ENCODE measurements at regions of chr13 and their contacts with region 1.

Region 1: GRCh38 chr13:23466144-23467002 is 32.9 kb upstream of the SACS start:
- DNase-seq: peak; percentile 28 to 81 (median 52)
- ATAC-seq: peak; percentile 88
- H3K4me3 ChIP-seq: peak overlapping the region; percentile 49
- H3K4me3 Mint-ChIP-seq: peak overlapping the region; percentile 86
- H3K27ac ChIP-seq: no peak overlapping the region
- H3K27ac Mint-ChIP-seq: no peak overlapping the region
- H3K4me1 ChIP-seq: peaks cover 14% of the 10 kb centered on the region
- H3K4me1 Mint-ChIP-seq: no peaks in the 10 kb centered on the region
- H3K27me3 ChIP-seq: no peaks in the 10 kb centered on the region
- H3K27me3 Mint-ChIP-seq: peaks cover 6% of the 10 kb centered on the region
- CTCF ChIP-seq: peak; percentile 63

Region 2: GRCh38 chr13:23254506-23254905 is 211.9 kb before region 1 on chr13:
- CTCF ChIA-PET with region 1: no interaction called
- POLR2A ChIA-PET with region 1: no interaction called
- intact Hi-C with region 1: no loop called
- DNase-seq: no peak
- ATAC-seq: no peak
- H3K4me3 ChIP-seq: no peak overlapping the region
- H3K4me3 Mint-ChIP-seq: no peak overlapping the region
- H3K27ac ChIP-seq: no peak overlapping the region
- H3K27ac Mint-ChIP-seq: no peak overlapping the region
- H3K4me1 ChIP-seq: no peaks in the 10 kb centered on the region
- H3K4me1 Mint-ChIP-seq: no peaks in the 10 kb centered on the region
- H3K27me3 ChIP-seq: no peaks in the 10 kb centered on the region
- H3K27me3 Mint-ChIP-seq: peaks cover 18% of the 10 kb centered on the region
- CTCF ChIP-seq: no peak

Region 3: DNA sequence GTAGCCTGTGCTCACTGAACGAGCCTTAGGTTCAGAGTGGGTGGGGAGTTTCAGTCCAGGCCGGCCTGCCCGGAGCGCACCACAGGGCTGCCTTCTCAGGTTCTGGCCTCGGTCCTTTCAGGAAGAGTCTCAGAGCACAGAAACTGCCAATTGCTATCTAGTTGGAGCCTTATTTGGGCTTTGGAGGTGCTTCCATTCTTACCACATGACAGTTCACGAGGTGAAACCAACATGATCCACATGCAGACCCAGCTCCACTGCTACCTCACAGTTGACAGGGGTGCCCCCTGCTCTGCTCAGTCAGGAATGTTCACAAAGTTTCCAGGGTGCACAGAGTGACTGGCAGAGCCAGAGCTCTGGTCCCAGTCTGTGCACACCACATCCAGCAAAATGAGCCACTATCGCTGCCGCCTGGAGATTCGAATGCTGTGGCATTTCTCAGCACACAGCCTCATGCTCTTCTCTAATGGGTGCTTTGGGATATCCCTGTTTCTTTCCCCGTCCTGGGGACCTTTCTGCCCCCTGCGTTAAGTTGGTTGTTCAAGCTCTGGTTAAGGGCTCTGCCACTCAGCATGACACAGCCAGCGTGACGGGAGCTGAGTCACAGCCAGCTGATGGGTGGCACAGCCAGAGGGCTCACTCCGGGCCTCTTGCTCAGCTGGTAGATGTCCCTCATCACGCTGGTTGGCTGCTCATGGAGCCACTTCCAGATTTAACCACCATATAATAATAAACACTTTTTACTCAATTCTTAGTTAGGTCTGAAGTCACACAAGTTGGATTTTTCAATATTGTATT is 25.4 kb before region 1 on chr13:
- CTCF ChIA-PET with region 1: no interaction called
- POLR2A ChIA-PET with region 1: no interaction called
- intact Hi-C with region 1: no loop called
- DNase-seq: no peak
- ATAC-seq: no peak
- H3K4me3 ChIP-seq: no peak overlapping the region
- H3K4me3 Mint-ChIP-seq: no peak overlapping the region
- H3K27ac ChIP-seq: no peak overlapping the region
- H3K27ac Mint-ChIP-seq: no peak overlapping the region
- H3K4me1 ChIP-seq: no peaks in the 10 kb centered on the region
- H3K4me1 Mint-ChIP-seq: no peaks in the 10 kb centered on the region
- H3K27me3 ChIP-seq: peaks cover 0 to 2% of the 10 kb centered on the region in 2 experiments
- H3K27me3 Mint-ChIP-seq: no peaks in the 10 kb centered on the region
- CTCF ChIP-seq: no peak

Region 4: GRCh38 chr13:23871616-23872220 is 405.3 kb after region 1 on chr13:
- CTCF ChIA-PET with region 1: no interaction called
- POLR2A ChIA-PET with region 1: no interaction called
- intact Hi-C with region 1: loop called (anchors 1 kb)
- DNase-seq: peak in 3 of 14 experiments; percentile 13 to 27 (median 18)
- ATAC-seq: no peak
- H3K4me3 ChIP-seq: no peak overlapping the region
- H3K4me3 Mint-ChIP-seq: no peak overlapping the region
- H3K27ac ChIP-seq: no peak overlapping the region
- H3K27ac Mint-ChIP-seq: no peak overlapping the region
- H3K4me1 ChIP-seq: no peaks in the 10 kb centered on the region
- H3K4me1 Mint-ChIP-seq: no peaks in the 10 kb centered on the region
- H3K27me3 ChIP-seq: no peaks in the 10 kb centered on the region
- H3K27me3 Mint-ChIP-seq: no peaks in the 10 kb centered on the region
- CTCF ChIP-seq: peak; percentile 80

Region 5: GRCh38 chr13:23888658-23889614 is 422.6 kb after region 1 on chr13 and contains the start of gene MIPEP:
- CTCF ChIA-PET with region 1: no interaction called
- POLR2A ChIA-PET with region 1: no interaction called
- intact Hi-C with region 1: loop called in 1 of 2 experiments (anchors 2 kb)
- DNase-seq: peak; percentile 68 to 94 (median 85)
- ATAC-seq: peak; percentile 91
- H3K4me3 ChIP-seq: peak within 1 kb of the TSS; percentile 81
- H3K4me3 Mint-ChIP-seq: peak within 1 kb of the TSS; percentile 94
- H3K27ac ChIP-seq: peak within 1 kb of the TSS; percentile 9 to 25
- H3K27ac Mint-ChIP-seq: peak within 1 kb of the TSS; percentile 76
- H3K4me1 ChIP-seq: peaks cover 18% of the 10 kb centered on the region
- H3K4me1 Mint-ChIP-seq: peaks cover 23% of the 10 kb centered on the region
- H3K27me3 ChIP-seq: no peaks in the 10 kb centered on the region
- H3K27me3 Mint-ChIP-seq: no peaks in the 10 kb centered on the region
- CTCF ChIP-seq: peak; percentile 86
- total RNA-seq, gene MIPEP: 3.9 to 4.8 TPM

Region 6: GRCh38 chr13:23899555-23899954 is 433.2 kb after region 1 on chr13:
- CTCF ChIA-PET with region 1: no interaction called
- POLR2A ChIA-PET with region 1: no interaction called
- intact Hi-C with region 1: loop called (anchors 1 to 2 kb)
- DNase-seq: peak in 10 of 14 experiments; percentile 4 to 62 (median 26)
- ATAC-seq: peak; percentile 77
- H3K4me3 ChIP-seq: no peak overlapping the region
- H3K4me3 Mint-ChIP-seq: no peak overlapping the region
- H3K27ac ChIP-seq: no peak overlapping the region
- H3K27ac Mint-ChIP-seq: no peak overlapping the region
- H3K4me1 ChIP-seq: peaks cover 12% of the 10 kb centered on the region
- H3K4me1 Mint-ChIP-seq: no peaks in the 10 kb centered on the region
- H3K27me3 ChIP-seq: peaks cover 24 to 38% of the 10 kb centered on the region in 2 experiments
- H3K27me3 Mint-ChIP-seq: peaks cover 50% of the 10 kb centered on the region
- CTCF ChIP-seq: peak; percentile 69

Region 7: DNA sequence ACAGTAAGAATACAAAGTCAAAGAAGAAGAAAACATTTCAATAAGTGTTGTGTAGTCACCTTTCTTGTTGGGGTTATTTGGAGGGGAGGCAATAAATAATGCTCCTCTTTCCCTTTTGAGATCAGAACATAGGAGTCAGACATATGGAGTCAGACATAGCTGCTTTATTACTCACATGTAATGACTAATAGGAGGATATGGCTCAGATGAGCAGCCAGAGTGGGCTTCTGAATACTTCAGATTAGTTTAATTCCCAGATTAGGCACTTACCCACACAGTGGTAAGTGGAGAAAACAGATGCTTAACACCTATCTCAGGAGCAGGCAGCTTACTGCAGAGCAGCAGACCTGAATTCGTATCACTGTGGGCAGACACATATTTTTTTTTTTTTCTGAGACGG is 462.6 kb after region 1 on chr13:
- CTCF ChIA-PET with region 1: no interaction called
- POLR2A ChIA-PET with region 1: no interaction called
- intact Hi-C with region 1: no loop called
- DNase-seq: no peak
- ATAC-seq: no peak
- H3K4me3 ChIP-seq: no peak overlapping the region
- H3K4me3 Mint-ChIP-seq: no peak overlapping the region
- H3K27ac ChIP-seq: no peak overlapping the region
- H3K27ac Mint-ChIP-seq: no peak overlapping the region
- H3K4me1 ChIP-seq: no peaks in the 10 kb centered on the region
- H3K4me1 Mint-ChIP-seq: no peaks in the 10 kb centered on the region
- H3K27me3 ChIP-seq: peaks cover 0 to 4% of the 10 kb centered on the region in 2 experiments
- H3K27me3 Mint-ChIP-seq: peaks cover 33% of the 10 kb centered on the region
- CTCF ChIP-seq: no peak

Region 8: DNA sequence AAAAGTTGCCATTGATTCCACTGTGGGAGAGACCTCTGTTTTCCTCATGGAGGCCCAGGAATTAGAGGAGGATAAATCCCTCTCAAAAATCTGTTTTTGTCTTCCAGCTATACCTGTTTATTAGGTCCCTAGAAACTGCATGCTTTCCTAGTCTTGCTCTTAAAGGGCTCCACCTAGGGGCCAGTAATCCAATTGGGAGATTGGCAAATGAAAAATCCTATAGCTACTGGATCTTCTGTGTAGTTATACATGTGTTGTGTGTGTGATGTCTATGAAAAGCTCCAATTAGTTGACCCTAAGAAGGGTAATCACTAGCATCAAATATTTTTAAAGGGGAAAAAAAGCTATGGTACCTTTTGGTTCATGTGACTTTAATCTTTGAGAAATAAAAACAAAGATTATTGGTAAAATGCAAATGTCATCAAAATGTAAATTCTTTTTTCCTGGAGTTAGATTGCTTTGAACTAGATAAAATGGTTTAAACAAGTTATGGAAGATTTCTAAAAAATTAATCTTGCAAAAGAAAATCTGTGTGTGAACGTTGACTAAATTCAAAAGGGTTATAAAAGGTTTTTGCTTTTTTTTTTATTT is 494.3 kb after region 1 on chr13:
- CTCF ChIA-PET with region 1: interaction called, 3 read pairs
- POLR2A ChIA-PET with region 1: no interaction called
- intact Hi-C with region 1: loop called in 1 of 2 experiments (anchors 5 kb)
- DNase-seq: peak in 4 of 14 experiments; percentile 14 to 41 (median 26)
- ATAC-seq: no peak
- H3K4me3 ChIP-seq: no peak overlapping the region
- H3K4me3 Mint-ChIP-seq: no peak overlapping the region
- H3K27ac ChIP-seq: no peak overlapping the region
- H3K27ac Mint-ChIP-seq: no peak overlapping the region
- H3K4me1 ChIP-seq: no peaks in the 10 kb centered on the region
- H3K4me1 Mint-ChIP-seq: no peaks in the 10 kb centered on the region
- H3K27me3 ChIP-seq: no peaks in the 10 kb centered on the region
- H3K27me3 Mint-ChIP-seq: no peaks in the 10 kb centered on the region
- CTCF ChIP-seq: no peak

Measured in CD4-positive, alpha-beta T cell (primary cell).